Thyroid gland (tissue), 4 donors: ENCODE measurements at regions of chr5 and their contacts with region 1.

Region 1: GRCh38 chr5:112419986-112420864 is 1.1 kb upstream of the EPB41L4A start:
- DNase-seq: peak; percentile 92
- H3K4me3 ChIP-seq: peak overlapping the region; percentile 72 to 94 (median 94)
- H3K27ac ChIP-seq: peak overlapping the region; percentile 90 to 95 (median 91)
- H3K4me1 ChIP-seq: peaks cover under 1 to 19% of the 10 kb centered on the region in 2 donors
- H3K27me3 ChIP-seq: no peaks in the 10 kb centered on the region
- CTCF ChIP-seq: peak; percentile 89 to 99 (median 94)
- POLR2A ChIP-seq: peak in 1 of 2 donors; percentile 33

Region 2: GRCh38 chr5:112174959-112175594 is 245.1 kb before region 1 on chr5:
- intact Hi-C with region 1: loop called (anchors 10 kb)
- DNase-seq: peak; percentile 25 to 32
- H3K4me3 ChIP-seq: no peak overlapping the region
- H3K27ac ChIP-seq: no peak overlapping the region
- H3K4me1 ChIP-seq: peaks cover 4 to 5% of the 10 kb centered on the region in 2 donors
- H3K27me3 ChIP-seq: no peaks in the 10 kb centered on the region
- CTCF ChIP-seq: peak; percentile 39 to 64 (median 62)
- POLR2A ChIP-seq: no peak

Region 3: DNA sequence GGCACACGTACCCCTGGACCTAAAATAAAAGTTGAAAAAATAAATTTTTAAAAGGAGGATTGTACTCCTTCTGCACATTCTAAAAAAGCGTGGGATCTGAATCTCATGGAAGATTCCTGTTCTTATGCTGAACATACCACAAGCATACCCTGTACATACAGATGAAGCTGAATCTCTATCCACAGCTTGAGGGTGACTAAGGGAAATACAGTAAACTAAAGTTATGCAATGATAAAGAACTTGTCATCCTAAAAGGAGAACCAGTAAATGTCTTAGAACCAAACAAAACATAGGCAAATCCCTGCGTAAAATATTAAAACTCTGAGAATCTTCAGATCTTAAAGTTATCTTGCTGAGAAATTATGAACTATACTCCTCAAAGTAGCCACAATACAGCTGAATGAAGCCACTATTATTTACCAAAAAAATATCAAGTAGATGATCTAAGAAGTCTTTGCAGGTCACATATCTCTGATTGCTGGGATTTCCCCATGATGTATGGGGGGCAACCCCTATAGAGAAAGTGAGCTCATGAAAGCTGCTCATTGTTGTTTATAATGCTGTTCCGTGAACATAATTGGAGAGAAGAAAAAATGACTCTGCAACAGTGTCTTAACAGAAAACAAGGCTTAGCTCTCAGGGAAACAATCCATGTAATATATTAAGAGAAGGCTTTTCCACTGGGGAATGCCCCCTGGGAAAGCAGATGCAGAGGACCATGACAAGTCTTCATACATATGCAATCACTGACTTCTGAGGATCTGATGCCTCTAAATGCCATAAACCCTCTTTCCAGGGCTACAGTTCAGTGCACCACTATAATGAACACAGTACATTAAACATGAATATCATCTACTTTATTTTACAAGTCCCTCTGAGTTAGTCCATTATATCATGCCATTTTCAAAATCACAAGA is 211.3 kb before region 1 on chr5:
- intact Hi-C with region 1: loop called (anchors 5 kb)
- DNase-seq: no peak
- H3K4me3 ChIP-seq: no peak overlapping the region
- H3K27ac ChIP-seq: no peak overlapping the region
- H3K4me1 ChIP-seq: peaks cover 0 to 2% of the 10 kb centered on the region in 2 donors
- H3K27me3 ChIP-seq: no peaks in the 10 kb centered on the region
- CTCF ChIP-seq: no peak
- POLR2A ChIP-seq: no peak

Region 4: GRCh38 chr5:112221128-112221527 is 199.1 kb before region 1 on chr5:
- intact Hi-C with region 1: no loop called
- DNase-seq: peak; percentile 29 to 37
- H3K4me3 ChIP-seq: no peak overlapping the region
- H3K27ac ChIP-seq: peak overlapping the region in 2 of 3 donors; percentile 36 to 43
- H3K4me1 ChIP-seq: peaks cover 18 to 32% of the 10 kb centered on the region in 2 donors
- H3K27me3 ChIP-seq: no peaks in the 10 kb centered on the region
- CTCF ChIP-seq: no peak
- POLR2A ChIP-seq: no peak